PC-9 (cell line): ENCODE measurements at regions of chr15 and their contacts with region 1.

Region 1: GRCh38 chr15:71826196-71826595 is 15.8 kb downstream of the NR2E3 start:
- DNase-seq: no peak
- H3K4me3 ChIP-seq: no peak overlapping the region
- H3K27ac ChIP-seq: no peak overlapping the region
- H3K4me1 ChIP-seq: no peaks in the 10 kb centered on the region
- H3K27me3 ChIP-seq: no peaks in the 10 kb centered on the region
- CTCF ChIP-seq: no peak

Region 2: DNA sequence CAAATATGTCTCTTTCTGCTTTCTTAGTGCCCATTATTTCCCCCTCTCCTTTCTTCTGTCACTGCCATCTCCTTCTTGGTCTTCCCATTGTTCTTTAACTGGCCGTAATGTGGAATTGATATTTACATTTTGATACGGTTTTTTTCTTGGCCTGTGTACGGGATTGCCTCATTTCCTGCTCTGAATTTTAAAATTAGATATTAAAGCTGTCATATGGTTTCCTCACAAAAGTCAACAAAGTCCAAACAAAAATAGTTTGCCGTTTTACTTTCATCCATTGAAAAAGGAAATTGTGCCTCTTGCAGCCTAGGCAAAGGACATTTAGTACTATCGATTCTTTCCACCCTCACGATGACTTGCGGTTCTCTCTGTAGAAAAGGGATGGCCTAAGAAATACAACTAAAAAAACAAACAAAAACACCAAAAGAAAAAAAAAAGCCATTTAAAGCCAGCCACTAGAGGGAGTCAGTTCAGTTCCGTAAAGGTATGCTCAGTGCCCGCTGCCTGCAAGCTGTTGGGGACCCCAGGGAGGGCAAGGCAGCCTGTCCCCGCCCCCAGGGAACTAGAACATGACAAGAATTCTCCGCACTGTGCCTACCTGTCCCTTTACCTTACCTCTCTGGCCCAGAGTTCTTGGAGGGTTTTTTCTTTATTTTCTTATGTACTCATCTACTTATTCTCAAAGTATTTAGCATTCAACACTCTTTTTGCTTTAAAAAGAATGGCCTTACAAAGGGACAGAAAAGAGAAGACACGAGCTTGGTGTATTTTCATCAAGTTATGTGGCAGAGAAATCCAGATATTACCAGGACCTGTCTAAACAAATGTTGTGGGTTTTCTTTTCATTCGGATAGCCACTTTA is 45.9 kb before region 1 on chr15:
- CTCF ChIA-PET with region 1: no interaction called
- POLR2A ChIA-PET with region 1: no interaction called
- intact Hi-C with region 1: no loop called
- DNase-seq: peak; percentile 48 to 52
- H3K4me3 ChIP-seq: peak overlapping the region; percentile 37; the same call in 1 of the 2 replicates
- H3K27ac ChIP-seq: peak overlapping the region; percentile 87
- H3K4me1 ChIP-seq: peaks cover 13% of the 10 kb centered on the region
- H3K27me3 ChIP-seq: no peaks in the 10 kb centered on the region
- CTCF ChIP-seq: peak; percentile 79

Region 3: DNA sequence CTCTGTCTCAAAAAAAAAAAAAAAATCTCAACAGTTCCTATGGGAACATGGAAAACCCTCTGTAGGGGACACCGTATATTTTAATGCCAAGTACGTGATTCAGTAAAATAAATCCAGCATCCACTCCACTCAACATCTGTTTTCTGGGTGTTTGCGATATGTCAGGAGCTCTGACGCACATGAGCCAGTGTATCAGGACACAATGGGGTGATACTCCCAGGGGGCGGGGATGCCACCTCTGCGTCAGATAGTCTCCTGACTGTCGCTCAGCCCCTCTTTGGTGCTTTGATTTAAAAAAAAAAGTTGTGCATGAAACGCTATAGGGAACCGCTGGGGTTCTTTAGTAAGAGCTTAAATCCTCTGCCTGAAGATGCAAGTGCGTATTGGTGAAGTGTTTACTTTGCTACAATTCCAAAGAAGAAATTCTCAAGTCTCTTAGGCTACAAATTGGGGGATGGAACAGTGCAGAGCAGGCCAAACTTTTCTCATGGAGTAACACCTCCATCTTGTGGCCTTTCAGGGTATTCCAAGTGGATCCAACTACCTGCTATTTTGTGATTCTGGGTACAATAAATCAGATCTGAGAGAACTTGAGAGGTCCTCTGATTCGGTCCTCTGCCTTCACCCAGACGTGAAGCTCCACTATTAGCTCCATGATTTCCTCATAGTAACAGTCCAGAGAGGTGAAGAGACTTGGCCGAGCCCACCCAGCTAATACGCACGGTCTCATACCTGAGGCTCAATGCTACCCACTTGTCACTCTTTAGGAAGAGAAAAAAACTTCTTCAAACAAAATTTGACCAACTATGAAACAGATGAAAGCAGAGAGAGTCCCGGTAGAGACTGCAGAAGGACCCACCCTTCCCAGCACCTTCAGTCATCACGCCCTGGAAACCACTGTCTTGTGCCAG is 25.1 kb before region 1 on chr15:
- CTCF ChIA-PET with region 1: no interaction called
- POLR2A ChIA-PET with region 1: no interaction called
- intact Hi-C with region 1: no loop called
- DNase-seq: peak; percentile 60 to 65
- H3K4me3 ChIP-seq: no peak overlapping the region
- H3K27ac ChIP-seq: no peak overlapping the region
- H3K4me1 ChIP-seq: peaks cover 13% of the 10 kb centered on the region
- H3K27me3 ChIP-seq: no peaks in the 10 kb centered on the region
- CTCF ChIP-seq: peak; percentile 85

Region 4: DNA sequence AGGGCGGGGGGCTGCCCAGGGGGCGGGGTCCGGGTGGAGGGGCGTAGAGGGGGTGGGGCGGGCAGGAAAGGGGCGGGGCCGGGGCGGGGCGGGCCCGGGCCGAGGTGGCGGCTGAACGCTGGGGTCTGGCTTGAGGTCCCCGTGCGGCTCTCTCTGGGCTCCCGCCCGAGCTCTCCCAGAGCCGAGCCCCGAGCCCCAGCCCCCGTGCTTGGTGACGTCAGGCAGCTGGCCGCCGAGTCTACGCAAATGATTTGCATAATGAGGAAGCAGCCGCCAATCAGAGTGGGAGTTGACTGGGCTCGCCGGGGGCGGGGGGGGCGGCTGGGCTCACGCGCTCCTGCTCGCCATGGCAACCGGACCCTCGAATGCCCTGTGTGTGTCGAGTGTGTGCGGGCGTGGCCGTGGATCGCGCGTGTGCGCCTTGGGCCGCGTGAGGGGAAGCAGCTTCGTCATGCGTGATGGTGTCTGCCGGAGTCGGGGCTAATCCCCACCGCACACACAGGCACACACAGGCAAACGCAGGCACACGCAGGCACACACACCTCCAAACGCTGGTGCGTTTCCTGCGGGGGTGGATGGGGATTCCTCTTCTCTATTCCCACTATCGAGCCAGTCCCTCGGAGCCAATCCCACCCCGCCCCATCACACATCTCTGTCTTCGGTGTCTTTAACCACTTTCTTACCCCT is 493.9 kb after region 1 on chr15 and contains the start of gene CELF6:
- CTCF ChIA-PET with region 1: no interaction called
- POLR2A ChIA-PET with region 1: no interaction called
- intact Hi-C with region 1: no loop called
- DNase-seq: peak; percentile 49 to 72
- H3K4me3 ChIP-seq: peak within 1 kb of the TSS; percentile 42; the same call in 1 of the 2 replicates
- H3K27ac ChIP-seq: no peak within 1 kb of the TSS
- H3K4me1 ChIP-seq: no peaks in the 10 kb centered on the region
- H3K27me3 ChIP-seq: no peaks in the 10 kb centered on the region
- CTCF ChIP-seq: no peak
- total RNA-seq, gene CELF6: not detected in 2 replicates

Region 5: DNA sequence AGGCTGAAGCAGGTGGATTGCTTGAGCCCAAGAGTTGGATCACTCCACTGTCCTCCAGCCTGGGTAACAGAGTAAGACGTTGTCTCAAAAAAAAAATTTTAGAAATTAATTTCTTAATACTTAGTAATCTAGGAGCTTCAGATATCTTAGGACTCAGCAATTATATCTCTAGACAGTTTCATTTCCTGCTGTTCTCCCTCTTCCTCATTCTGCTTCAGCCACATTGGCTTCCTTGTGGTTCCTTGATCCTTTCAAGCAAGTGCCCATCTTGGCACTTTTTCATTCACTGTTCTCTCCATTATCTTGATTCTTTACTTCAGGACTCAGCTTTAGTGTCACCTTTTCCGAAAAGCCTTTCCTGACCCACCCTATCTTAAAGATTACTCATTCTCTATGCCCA is 594.4 kb after region 1 on chr15:
- CTCF ChIA-PET with region 1: interaction called, 27 read pairs
- POLR2A ChIA-PET with region 1: no interaction called
- intact Hi-C with region 1: no loop called
- DNase-seq: no peak
- H3K4me3 ChIP-seq: no peak overlapping the region
- H3K27ac ChIP-seq: no peak overlapping the region
- H3K4me1 ChIP-seq: no peaks in the 10 kb centered on the region
- H3K27me3 ChIP-seq: peaks cover 16% of the 10 kb centered on the region
- CTCF ChIP-seq: no peak

Region 6: DNA sequence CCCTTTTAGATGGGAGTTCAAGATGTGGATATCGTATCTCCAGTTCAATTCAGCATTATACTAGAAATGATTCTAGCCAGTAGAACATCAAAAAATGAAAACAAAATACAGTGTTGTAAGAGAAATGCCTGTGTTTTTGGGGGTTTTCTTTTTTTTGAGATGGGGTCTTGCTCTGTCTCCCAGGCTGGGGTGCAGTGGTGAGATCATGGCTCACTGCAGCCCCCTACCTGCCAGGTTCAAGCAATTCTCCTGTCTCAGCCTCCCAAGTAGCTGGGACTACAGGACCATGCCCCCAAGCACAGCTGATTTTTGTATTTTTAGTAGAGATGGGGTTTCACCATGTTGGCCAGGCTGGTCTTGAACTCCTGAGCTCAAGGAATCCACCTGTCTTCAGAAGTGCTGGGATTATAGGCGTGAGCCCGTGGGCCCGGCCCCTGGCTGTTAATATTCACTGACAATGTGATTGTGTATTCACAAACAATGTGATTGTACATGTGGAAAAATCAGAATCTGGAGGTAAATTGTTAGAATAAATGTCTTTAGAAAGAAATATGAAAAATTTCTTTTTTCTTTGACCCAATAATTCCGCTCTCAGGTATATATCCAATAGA is 706.9 kb after region 1 on chr15:
- CTCF ChIA-PET with region 1: no interaction called
- POLR2A ChIA-PET with region 1: interaction called, 13 read pairs
- intact Hi-C with region 1: no loop called
- DNase-seq: no peak
- H3K4me3 ChIP-seq: no peak overlapping the region
- H3K27ac ChIP-seq: 0 out of 2 replicates have a peak overlapping the region, but pooled peaks have one; percentile 1
- H3K4me1 ChIP-seq: no peaks in the 10 kb centered on the region
- H3K27me3 ChIP-seq: no peaks in the 10 kb centered on the region
- CTCF ChIP-seq: peak; percentile 45; the same call in 1 of the 2 replicates